A549 (cell line): ENCODE measurements at regions of chr17 and their contacts with region 1.

Region 1: GRCh38 chr17:50200457-50201275 is 765 bp downstream of the COL1A1 start:
- DNase-seq: peak; percentile 90 to 95
- ATAC-seq: peak; percentile 74 to 86
- H3K4me3 ChIP-seq: peak overlapping the region; percentile 47
- H3K27ac ChIP-seq: peak overlapping the region; percentile 77 to 90
- H3K4me1 ChIP-seq: peaks cover 44% of the 10 kb centered on the region
- CTCF ChIP-seq: peak; percentile 100
- EP300 ChIP-seq: no peak
- POLR2A ChIP-seq: no peak
- RAD21 ChIP-seq: peak; percentile 94 to 100

Region 2: GRCh38 chr17:50094753-50095619 is 105.7 kb before region 1 on chr17 and contains the start of gene PDK2:
- CTCF ChIA-PET with region 1: interaction called, 11 read pairs
- POLR2A ChIA-PET with region 1: no interaction called
- DNase-seq: peak; percentile 98 to 99
- ATAC-seq: peak; percentile 67 to 94
- H3K4me3 ChIP-seq: peak within 1 kb of the TSS; percentile 76
- H3K27ac ChIP-seq: peak within 1 kb of the TSS; percentile 82 to 90
- H3K4me1 ChIP-seq: peaks cover 20% of the 10 kb centered on the region
- CTCF ChIP-seq: no peak
- EP300 ChIP-seq: no peak
- POLR2A ChIP-seq: peak; percentile 46
- RAD21 ChIP-seq: no peak
- polyA plus RNA-seq, gene PDK2: 28.5 and 34.4 TPM in 2 replicates

Region 3: DNA sequence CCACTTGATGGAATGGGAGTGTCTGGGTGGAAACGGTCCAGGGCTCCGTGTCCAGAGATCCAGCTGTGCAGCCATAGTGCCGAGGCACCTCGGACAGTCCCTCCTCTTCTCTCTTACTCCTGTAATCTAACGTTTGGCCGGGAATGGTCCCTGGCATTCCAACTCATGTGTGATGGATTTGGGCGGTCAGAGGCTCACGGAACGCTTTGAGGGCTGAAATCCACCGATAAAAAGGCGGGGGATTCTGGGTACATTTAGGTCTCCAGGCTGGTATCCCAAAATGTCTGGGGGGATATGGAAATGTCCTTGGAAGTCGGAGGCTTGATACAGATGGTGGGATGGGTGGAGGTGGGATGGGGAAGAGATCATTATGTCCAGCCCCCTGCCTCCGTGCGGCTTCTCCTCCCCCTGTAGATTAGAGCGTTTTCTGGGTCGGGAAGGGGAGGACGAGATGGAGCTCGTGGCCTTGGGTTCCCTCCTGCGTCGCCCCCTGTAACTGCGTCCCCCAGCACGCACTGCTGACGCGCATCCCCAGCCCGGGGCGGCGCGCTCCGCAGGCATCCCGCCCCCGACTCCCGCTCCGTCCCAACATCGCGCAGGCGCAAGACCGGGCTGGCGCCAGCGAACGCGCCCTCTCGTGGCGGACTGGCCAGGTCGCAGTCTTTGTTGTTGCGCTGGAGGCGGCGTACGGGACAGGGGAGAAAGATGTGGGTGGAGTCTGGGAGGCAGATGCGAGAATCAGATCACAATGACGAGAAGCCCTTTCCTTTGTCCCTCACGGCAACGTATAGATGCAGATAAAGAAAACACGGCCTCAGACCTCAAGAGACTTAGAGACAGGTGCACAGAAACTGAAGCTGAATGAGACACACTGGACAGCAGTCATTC is 39.4 kb before region 1 on chr17:
- CTCF ChIA-PET with region 1: interaction called, 817 read pairs
- POLR2A ChIA-PET with region 1: interaction called, 3 read pairs
- DNase-seq: peak; percentile 92 to 100
- ATAC-seq: peak; percentile 88 to 96
- H3K4me3 ChIP-seq: peak overlapping the region; percentile 74
- H3K27ac ChIP-seq: peak overlapping the region; percentile 80 to 86
- H3K4me1 ChIP-seq: peaks cover 9% of the 10 kb centered on the region; the same call in 2 of the 3 replicates
- CTCF ChIP-seq: peak; percentile 98
- EP300 ChIP-seq: no peak
- POLR2A ChIP-seq: peak; percentile 92
- RAD21 ChIP-seq: peak; percentile 72 to 80

Region 4: GRCh38 chr17:50213026-50214022 is 12.7 kb after region 1 on chr17:
- CTCF ChIA-PET with region 1: interaction called, 401 read pairs
- POLR2A ChIA-PET with region 1: no interaction called
- DNase-seq: peak in 1 of 2 experiments; percentile 37
- ATAC-seq: peak; percentile 15 to 49; a peak in 3 of 6 replicates
- H3K4me3 ChIP-seq: no peak overlapping the region
- H3K27ac ChIP-seq: peak overlapping the region in 1 of 2 experiments; percentile 22; a peak in 1 of 6 replicates
- H3K4me1 ChIP-seq: peaks cover 39% of the 10 kb centered on the region
- CTCF ChIP-seq: peak; percentile 14; the same call in 1 of the 3 replicates
- EP300 ChIP-seq: no peak
- POLR2A ChIP-seq: no peak
- RAD21 ChIP-seq: no peak

Region 5: GRCh38 chr17:50252781-50253180 is 52.1 kb after region 1 on chr17:
- CTCF ChIA-PET with region 1: interaction called, 1,255 read pairs
- POLR2A ChIA-PET with region 1: no interaction called
- DNase-seq: no peak
- ATAC-seq: no peak
- H3K4me3 ChIP-seq: no peak overlapping the region
- H3K27ac ChIP-seq: no peak overlapping the region
- H3K4me1 ChIP-seq: 0 out of 3 replicates have a peak, but pooled peaks cover 3% of the 10 kb centered on the region
- CTCF ChIP-seq: no peak
- EP300 ChIP-seq: no peak
- POLR2A ChIP-seq: no peak
- RAD21 ChIP-seq: no peak

Region 6: DNA sequence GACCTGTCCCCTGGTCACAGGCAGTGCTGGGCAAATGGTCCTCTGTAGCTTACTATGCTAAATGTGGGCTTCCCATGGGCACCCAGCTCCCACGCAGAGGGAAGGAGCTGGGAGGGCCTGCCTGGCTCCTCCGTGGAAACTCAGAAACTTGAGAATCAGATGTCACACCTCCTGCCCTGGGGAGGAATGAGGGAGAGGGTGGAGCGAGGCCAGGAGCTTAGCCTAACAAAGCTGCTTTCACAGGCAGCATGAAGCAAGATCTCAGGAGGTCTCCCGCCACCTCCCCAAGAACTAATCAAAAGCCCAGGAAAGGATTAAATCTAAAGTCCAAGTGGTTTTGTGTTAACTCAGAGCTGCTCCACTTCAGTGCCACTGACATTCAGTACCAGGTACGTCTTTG is 111.6 kb after region 1 on chr17:
- CTCF ChIA-PET with region 1: interaction called, 935 read pairs
- POLR2A ChIA-PET with region 1: no interaction called
- DNase-seq: no peak
- ATAC-seq: no peak; a peak in 1 of 6 replicates
- H3K4me3 ChIP-seq: no peak overlapping the region
- H3K27ac ChIP-seq: no peak overlapping the region
- H3K4me1 ChIP-seq: no peaks in the 10 kb centered on the region
- CTCF ChIP-seq: no peak
- EP300 ChIP-seq: no peak
- POLR2A ChIP-seq: no peak
- RAD21 ChIP-seq: no peak